ENCODE measurements at regions of chr4 and their contacts with region 1.

Region 1: DNA sequence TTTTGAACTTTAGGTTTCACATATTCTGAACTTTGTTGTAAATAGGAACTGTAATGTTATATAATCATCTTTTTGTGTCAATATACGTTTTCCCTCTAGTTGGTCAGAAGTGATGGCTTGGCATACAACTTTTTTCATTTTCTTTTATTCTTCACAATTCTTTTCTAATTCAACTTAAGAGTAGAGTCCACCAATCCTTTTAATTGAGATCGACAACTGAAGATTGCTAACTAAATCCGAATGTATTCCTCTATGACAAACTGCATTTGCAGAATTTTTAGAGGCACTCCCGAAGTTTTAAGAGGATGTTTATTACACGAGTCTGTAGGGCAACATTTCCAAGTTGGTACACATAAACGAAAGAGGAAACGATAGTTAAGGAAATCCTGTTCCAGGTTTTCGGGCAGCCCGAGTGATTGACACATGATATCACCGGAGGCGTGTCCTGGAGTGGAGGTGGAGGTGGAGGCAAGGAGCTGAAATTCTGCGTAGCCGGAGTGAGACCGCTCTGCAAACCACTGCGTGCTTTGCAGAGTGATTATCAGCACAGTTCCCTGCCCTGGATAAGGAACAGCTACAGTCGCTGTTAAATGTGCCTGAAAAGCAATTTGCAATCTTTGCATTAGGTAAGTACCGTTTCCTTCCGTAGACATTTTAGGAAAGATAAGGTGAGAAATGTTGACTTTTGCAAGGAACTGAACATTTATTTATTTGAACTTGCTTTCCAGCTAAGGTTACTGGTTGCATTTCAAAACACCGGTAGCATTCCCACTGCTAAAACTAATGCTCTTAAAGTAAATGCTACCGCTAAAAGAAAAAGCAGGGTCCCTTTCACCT is at the start of gene SPRY1:
- DNase-seq: peak; percentile 90 to 91
- H3K4me3 ChIP-seq: peak within 1 kb of the TSS; percentile 89 to 93
- H3K27ac ChIP-seq: peak within 1 kb of the TSS; percentile 89
- H3K4me1 ChIP-seq: peaks cover 0 to 24% (median 2%) of the 10 kb centered on the region in 4 donors
- H3K27me3 ChIP-seq: no peaks in the 10 kb centered on the region
- CTCF ChIP-seq: no peak

Region 2: GRCh38 chr4:122980860-122981259 is 415.7 kb before region 1 on chr4:
- intact Hi-C with region 1: no loop called
- DNase-seq: no peak
- H3K4me3 ChIP-seq: no peak overlapping the region
- H3K27ac ChIP-seq: no peak overlapping the region
- H3K4me1 ChIP-seq: no peaks in the 10 kb centered on the region
- H3K27me3 ChIP-seq: no peaks in the 10 kb centered on the region
- CTCF ChIP-seq: no peak

Region 3: GRCh38 chr4:123555233-123555806 is 158.8 kb after region 1 on chr4:
- intact Hi-C with region 1: loop called (anchors 10 kb)
- DNase-seq: peak; percentile 92 to 95
- H3K4me3 ChIP-seq: peak overlapping the region; percentile 2 to 13
- H3K27ac ChIP-seq: peak overlapping the region; percentile 70 to 71
- H3K4me1 ChIP-seq: peaks cover 0 to 49% (median 31%) of the 10 kb centered on the region in 4 donors
- H3K27me3 ChIP-seq: no peaks in the 10 kb centered on the region
- CTCF ChIP-seq: no peak

Region 4: DNA sequence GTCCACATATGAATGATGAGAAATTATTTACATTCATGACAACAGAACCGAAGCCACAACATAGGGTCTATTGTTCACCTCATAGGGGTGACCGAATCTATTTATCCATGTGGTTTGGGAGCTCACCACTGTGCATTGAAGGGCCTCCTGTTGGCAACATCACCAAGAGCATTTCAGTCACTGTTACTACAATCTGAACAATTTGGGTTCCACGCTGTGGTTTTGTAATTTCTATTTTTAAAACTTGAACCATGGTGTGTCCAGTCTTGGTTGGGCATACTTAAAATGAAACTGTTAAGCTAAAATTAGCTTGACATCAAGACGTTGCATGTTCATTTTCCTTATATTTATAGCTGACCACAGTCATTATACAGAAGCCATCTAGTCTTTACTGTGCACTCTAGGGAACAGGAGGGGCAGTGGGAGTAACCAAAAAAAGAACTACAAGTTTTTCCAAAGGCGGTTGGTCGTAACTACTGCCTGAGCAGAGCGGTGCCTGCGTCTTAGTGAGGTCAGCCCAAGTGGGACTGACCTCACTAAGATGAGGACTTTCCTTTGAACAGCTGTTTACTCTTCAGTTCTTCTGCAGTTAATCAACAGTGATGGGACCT is 192.2 kb after region 1 on chr4:
- intact Hi-C with region 1: loop called (anchors 2 kb)
- DNase-seq: peak in 1 of 2 donors; percentile 78
- H3K4me3 ChIP-seq: peak overlapping the region in 1 of 2 donors; percentile 15
- H3K27ac ChIP-seq: peak overlapping the region; percentile 74 to 77
- H3K4me1 ChIP-seq: peaks cover 0 to 24% (median 6%) of the 10 kb centered on the region in 4 donors
- H3K27me3 ChIP-seq: no peaks in the 10 kb centered on the region
- CTCF ChIP-seq: no peak

Region 5: DNA sequence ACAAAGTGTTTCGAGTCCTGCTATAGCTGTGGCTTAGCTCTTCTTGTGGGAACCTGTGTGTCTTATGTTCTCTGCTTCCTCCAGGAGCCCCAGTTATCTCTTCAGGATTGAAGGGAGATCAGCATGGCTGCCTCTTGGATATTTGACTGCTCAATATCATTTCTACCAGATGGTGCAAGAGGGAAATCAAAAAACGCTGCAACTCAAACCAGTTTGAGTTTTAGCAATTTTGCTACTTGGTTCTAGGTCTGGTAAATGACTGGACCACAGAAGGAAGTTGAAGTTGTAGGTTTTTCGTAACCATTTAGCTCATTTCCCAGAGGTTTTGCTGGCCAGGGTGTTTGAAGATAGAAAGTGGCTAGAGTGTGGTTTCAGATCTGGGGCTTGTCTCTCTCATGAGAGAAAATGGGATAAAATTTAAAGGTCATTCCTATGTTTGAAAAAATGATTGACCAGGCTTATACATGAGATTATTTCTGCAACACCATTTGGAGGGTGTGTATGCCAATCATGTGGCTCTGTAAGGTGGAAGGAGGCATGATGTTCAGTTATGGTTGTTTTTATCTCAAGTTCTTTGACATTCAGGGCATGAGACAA is 210.5 kb after region 1 on chr4:
- intact Hi-C with region 1: no loop called
- DNase-seq: no peak
- H3K4me3 ChIP-seq: no peak overlapping the region
- H3K27ac ChIP-seq: no peak overlapping the region
- H3K4me1 ChIP-seq: no peaks in the 10 kb centered on the region
- H3K27me3 ChIP-seq: no peaks in the 10 kb centered on the region
- CTCF ChIP-seq: no peak

Region 6: GRCh38 chr4:123661080-123661737 is 264.7 kb after region 1 on chr4:
- intact Hi-C with region 1: loop called (anchors 5 kb)
- DNase-seq: no peak
- H3K4me3 ChIP-seq: no peak overlapping the region
- H3K27ac ChIP-seq: no peak overlapping the region
- H3K4me1 ChIP-seq: peaks cover 0 to 21% (median 3%) of the 10 kb centered on the region in 4 donors
- H3K27me3 ChIP-seq: no peaks in the 10 kb centered on the region
- CTCF ChIP-seq: peak; percentile 42 to 49

Region 7: DNA sequence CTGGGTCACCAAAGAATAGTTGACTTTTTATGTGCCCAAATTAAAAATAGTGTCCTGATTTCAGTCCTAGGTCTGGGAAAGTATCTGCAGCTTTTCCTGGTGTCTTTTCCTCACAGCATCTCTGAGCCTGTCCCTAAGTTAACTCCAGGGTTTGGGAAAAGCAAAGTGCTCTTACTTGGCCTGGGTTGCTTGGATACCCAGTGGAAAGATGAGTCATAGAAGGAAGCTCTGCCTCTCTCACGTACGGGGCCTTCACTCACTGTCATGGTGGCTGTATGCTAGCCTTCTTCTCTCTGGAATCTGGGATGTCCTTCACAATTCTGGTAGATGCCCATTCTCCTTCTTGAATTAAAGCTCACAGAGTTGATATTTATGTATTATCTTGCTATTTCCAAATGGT is 708.7 kb after region 1 on chr4:
- intact Hi-C with region 1: loop called (anchors 10 kb)
- DNase-seq: no peak
- H3K4me3 ChIP-seq: no peak overlapping the region
- H3K27ac ChIP-seq: no peak overlapping the region
- H3K4me1 ChIP-seq: no peaks in the 10 kb centered on the region
- H3K27me3 ChIP-seq: no peaks in the 10 kb centered on the region
- CTCF ChIP-seq: no peak

Region 8: GRCh38 chr4:124202099-124202498 is 805.6 kb after region 1 on chr4:
- intact Hi-C with region 1: loop called (anchors 10 kb)
- DNase-seq: peak in 1 of 2 donors; percentile 62
- H3K4me3 ChIP-seq: no peak overlapping the region
- H3K27ac ChIP-seq: peak overlapping the region; percentile 24 to 27
- H3K4me1 ChIP-seq: peaks cover 0 to 50% (median 12%) of the 10 kb centered on the region in 4 donors
- H3K27me3 ChIP-seq: no peaks in the 10 kb centered on the region
- CTCF ChIP-seq: peak; percentile 24 to 45

Measured in tibial artery (tissue), 4 donors.